A549 (cell line): ENCODE measurements at regions of chr10 and their contacts with region 1.

Region 1: GRCh38 chr10:95290461-95291364 is at the start of gene PDLIM1:
- DNase-seq: peak; percentile 72 to 82
- ATAC-seq: peak; percentile 91 to 94
- H3K4me3 ChIP-seq: peak within 1 kb of the TSS; percentile 91
- H3K27ac ChIP-seq: peak within 1 kb of the TSS; percentile 97 to 98
- H3K4me1 ChIP-seq: peaks cover 35% of the 10 kb centered on the region
- CTCF ChIP-seq: peak; percentile 22; the same call in 1 of the 3 replicates
- EP300 ChIP-seq: no peak
- POLR2A ChIP-seq: peak; percentile 65
- RAD21 ChIP-seq: peak in 1 of 2 experiments; percentile 41; a peak in 2 of 5 replicates
- polyA plus RNA-seq, gene PDLIM1: 92.5 and 132 TPM in 2 replicates

Region 2: DNA sequence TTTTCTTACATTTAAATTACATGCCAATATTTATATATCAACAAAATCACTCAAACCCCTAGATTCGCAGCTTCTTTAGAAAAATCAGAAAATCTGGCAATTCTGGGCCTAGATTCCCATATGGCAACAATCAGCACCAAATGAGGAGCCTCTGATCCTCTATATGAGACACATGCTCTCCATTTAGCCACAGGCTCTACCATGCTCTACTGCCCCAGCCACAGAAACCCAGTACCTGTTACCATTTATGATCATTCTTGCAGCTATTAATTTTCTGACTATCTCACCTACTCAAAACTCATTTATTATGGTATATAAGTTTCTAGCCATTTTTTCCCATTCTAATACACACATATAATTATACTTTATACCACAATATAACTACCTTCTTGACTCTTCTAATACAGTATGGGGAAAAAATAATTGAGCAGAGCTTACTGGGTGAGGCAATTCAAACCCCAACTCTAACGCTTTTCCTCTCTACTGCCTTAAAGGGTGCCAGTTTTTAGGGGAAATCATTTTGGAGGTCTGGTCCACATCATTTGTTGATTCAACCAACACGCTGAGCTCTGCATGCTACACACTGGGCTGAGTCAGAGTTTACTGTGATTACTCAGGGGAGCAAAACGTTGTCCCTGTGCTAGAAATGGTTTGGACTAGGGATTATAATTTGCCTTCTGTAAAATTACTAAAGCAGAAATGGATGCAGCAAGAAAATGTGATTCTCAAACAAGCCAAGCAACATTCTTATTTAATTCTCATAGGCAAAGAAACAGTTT is 11.5 kb before region 1 on chr10:
- CTCF ChIA-PET with region 1: interaction called, 14 read pairs
- POLR2A ChIA-PET with region 1: interaction called, 5 read pairs
- DNase-seq: peak; percentile 46 to 47
- ATAC-seq: peak; percentile 77 to 78; a peak in 5 of 6 replicates
- H3K4me3 ChIP-seq: peak overlapping the region; percentile 10; the same call in 1 of the 3 replicates
- H3K27ac ChIP-seq: peak overlapping the region; percentile 78 to 83
- H3K4me1 ChIP-seq: peaks cover 92% of the 10 kb centered on the region
- CTCF ChIP-seq: no peak
- EP300 ChIP-seq: no peak
- POLR2A ChIP-seq: no peak
- RAD21 ChIP-seq: 0 out of 5 replicates have a peak, but pooled peaks of 1 of the 2 experiments have one; percentile 1